ENCODE measurements at regions of chr3 and their contacts with region 1.

Region 1: GRCh38 chr3:9890249-9891071 is at the start of gene JAGN1:
- DNase-seq: peak; percentile 83 to 95 (median 90)
- ATAC-seq: peak; percentile 89 to 92
- H3K4me3 Mint-ChIP-seq: peak within 1 kb of the TSS; percentile 93 to 99 (median 96)
- H3K27ac Mint-ChIP-seq: peak within 1 kb of the TSS; percentile 94 to 100 (median 100)
- H3K4me1 Mint-ChIP-seq: peaks cover 20 to 42% (median 39%) of the 10 kb centered on the region in 4 donors
- H3K27me3 Mint-ChIP-seq: no peaks in the 10 kb centered on the region
- polyA plus RNA-seq, gene JAGN1: 38.4 to 48.5 (median 39.8) TPM

Region 2: GRCh38 chr3:9902372-9903237 is 12.1 kb after region 1 on chr3 and contains the start of gene IL17RE:
- POLR2A ChIA-PET with region 1: interaction called, 23 read pairs
- DNase-seq: peak in 1 of 10 donors; percentile 20
- ATAC-seq: peak; percentile 76 to 77
- H3K4me3 Mint-ChIP-seq: peak within 1 kb of the TSS; percentile 2 to 74 (median 55)
- H3K27ac Mint-ChIP-seq: peak within 1 kb of the TSS; percentile 13 to 88 (median 67)
- H3K4me1 Mint-ChIP-seq: peaks cover 14 to 35% (median 32%) of the 10 kb centered on the region in 4 donors
- H3K27me3 Mint-ChIP-seq: peaks cover 0 to 1% (median 0%) of the 10 kb centered on the region in 5 donors
- polyA plus RNA-seq, gene IL17RE: 0.16 to 0.64 TPM in 2 of 3 donors, not detected in the other

Region 3: GRCh38 chr3:9946112-9947024 is 55.9 kb after region 1 on chr3:
- POLR2A ChIA-PET with region 1: interaction called, 14 read pairs
- DNase-seq: peak; percentile 62 to 87 (median 79)
- ATAC-seq: peak; percentile 92 to 96
- H3K4me3 Mint-ChIP-seq: peak overlapping the region; percentile 71 to 87 (median 81)
- H3K27ac Mint-ChIP-seq: peak overlapping the region; percentile 64 to 93 (median 85)
- H3K4me1 Mint-ChIP-seq: peaks cover 4 to 16% (median 12%) of the 10 kb centered on the region in 4 donors
- H3K27me3 Mint-ChIP-seq: no peaks in the 10 kb centered on the region